Tibial artery (tissue), 4 donors: ENCODE measurements at regions of chr22 and their contacts with region 1.

Region 1: DNA sequence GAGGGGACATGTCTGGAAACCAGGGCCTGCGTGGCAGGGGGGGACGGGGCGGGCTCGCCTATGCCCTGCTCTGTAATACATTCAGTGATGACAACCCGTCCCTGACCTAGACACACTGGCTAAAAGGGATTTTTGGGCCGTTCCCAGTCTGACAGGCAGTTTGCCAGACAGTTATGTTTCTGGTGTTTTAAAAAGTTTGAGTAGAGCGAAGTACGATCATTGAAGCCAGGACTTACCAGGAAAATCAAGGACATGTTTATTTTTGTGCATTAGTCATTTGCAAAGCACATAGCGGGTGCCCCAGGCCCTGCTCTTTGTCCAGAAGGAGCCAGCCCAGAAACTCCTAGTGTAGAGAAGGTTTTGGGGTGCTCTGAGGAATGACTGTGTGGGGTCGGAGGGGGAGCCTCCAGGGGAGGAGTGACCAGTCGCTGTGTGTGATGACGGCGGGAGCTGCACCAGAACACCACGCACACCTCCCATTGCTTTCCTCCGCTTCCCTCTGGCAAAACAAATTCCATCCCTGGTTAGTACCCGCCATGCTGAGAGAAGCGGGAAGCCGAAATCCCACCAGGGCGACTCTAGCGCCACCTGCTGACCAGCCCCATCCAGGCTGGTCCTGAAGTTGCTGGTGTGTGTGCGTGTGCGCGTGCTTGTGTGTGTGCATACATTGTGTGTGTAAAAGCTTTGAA is 50.8 kb downstream of the FBLN1 start:
- DNase-seq: peak; percentile 86 to 96
- H3K4me3 ChIP-seq: peak overlapping the region; percentile 2 to 34
- H3K27ac ChIP-seq: peak overlapping the region; percentile 87 to 94
- H3K4me1 ChIP-seq: peaks cover 4 to 60% (median 58%) of the 10 kb centered on the region in 4 donors
- H3K27me3 ChIP-seq: no peaks in the 10 kb centered on the region
- CTCF ChIP-seq: peak; percentile 95 to 98

Region 2: GRCh38 chr22:45268958-45269844 is 284.3 kb before region 1 on chr22:
- intact Hi-C with region 1: loop called (anchors 2 kb)
- DNase-seq: peak; percentile 79 to 85
- H3K4me3 ChIP-seq: peak overlapping the region; percentile 55
- H3K27ac ChIP-seq: peak overlapping the region; percentile 64 to 69
- H3K4me1 ChIP-seq: peaks cover 3 to 43% (median 30%) of the 10 kb centered on the region in 4 donors
- H3K27me3 ChIP-seq: no peaks in the 10 kb centered on the region
- CTCF ChIP-seq: peak; percentile 89 to 97

Region 3: GRCh38 chr22:45435544-45436139 is 117.9 kb before region 1 on chr22:
- intact Hi-C with region 1: loop called (anchors 2 kb)
- DNase-seq: peak; percentile 90 to 94
- H3K4me3 ChIP-seq: no peak overlapping the region
- H3K27ac ChIP-seq: peak overlapping the region; percentile 46 to 65
- H3K4me1 ChIP-seq: peaks cover 0 to 10% (median 6%) of the 10 kb centered on the region in 4 donors
- H3K27me3 ChIP-seq: no peaks in the 10 kb centered on the region
- CTCF ChIP-seq: peak; percentile 95 to 99

Region 4: DNA sequence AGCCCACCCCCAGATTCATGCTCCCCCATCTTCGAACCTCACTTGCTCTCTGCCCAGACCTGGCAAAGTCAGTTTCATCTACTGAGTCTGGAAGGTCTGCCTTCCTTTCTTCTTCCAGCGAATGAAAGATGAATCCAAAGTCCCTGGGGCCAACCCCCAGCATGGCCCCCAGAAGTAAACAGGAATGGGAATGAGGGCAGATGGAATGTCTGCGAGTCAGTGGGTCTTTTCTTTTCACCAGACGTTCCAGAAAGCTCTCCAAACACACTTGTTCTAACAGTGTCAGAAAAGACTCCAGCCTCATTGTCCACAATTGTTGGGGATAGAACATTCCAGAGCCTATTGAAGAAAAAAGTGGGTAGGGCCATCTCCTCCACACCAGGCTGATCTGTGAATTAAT is 111.4 kb before region 1 on chr22:
- intact Hi-C with region 1: loop called (anchors 2 kb)
- DNase-seq: no peak
- H3K4me3 ChIP-seq: no peak overlapping the region
- H3K27ac ChIP-seq: peak overlapping the region; percentile 33 to 43
- H3K4me1 ChIP-seq: peaks cover 0 to 8% (median 3%) of the 10 kb centered on the region in 4 donors
- H3K27me3 ChIP-seq: no peaks in the 10 kb centered on the region
- CTCF ChIP-seq: no peak